PC-3 (cell line): ENCODE measurements at regions of chr14 and their contacts with region 1.

Region 1: DNA sequence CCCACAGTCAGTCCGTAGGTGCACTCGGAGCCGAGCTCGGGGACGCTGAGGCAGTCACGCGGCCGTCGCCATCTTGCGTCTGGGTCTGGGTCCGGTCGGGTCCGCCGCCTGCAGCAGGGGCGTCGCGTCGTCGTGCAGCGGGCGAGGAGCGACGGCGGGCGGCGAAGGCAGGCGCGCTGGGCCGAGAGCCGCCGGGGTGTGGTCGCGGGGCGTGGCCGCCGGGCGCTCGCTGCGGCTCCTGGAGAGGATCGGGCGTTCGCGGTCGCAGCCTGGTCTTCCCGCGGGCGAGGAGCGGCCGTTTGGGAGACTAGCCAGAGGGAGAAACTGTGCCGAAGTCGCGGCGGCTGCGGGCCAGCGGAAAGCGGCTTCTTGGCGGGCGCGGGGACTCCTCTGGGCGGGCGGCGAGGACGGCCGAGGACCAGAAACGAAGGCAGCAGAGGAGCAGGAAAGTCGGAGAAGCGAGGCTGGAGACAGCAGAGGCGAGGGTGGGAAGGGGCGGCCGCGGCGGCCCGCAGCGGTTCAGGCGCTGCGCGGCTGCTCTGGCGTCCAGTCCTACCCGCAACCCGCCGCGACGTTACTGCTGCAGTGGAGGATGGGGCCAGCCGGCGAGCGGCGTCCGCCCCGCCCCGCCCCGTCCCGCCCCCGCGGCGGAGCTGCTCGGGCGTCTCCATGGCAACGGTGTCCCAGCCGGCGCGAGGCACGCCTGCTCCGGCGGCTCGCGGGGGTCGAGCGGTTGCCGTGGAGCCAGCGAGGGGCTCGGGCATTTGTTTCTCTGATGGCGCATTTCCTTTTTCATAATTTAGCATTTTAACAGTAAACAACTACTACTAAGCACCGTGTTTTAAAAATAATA is at the start of gene PNMA1:
- DNase-seq: peak; percentile 85
- ATAC-seq: peak; percentile 71
- H3K4me3 ChIP-seq: peak within 1 kb of the TSS; percentile 99
- H3K27ac ChIP-seq: peak within 1 kb of the TSS; percentile 78
- H3K4me1 ChIP-seq: peaks cover 14% of the 10 kb centered on the region
- H3K27me3 ChIP-seq: no peaks in the 10 kb centered on the region
- CTCF ChIP-seq: no peak
- total RNA-seq, gene PNMA1: 30.8 and 36.7 TPM in 2 replicates

Region 2: GRCh38 chr14:73696466-73697400 is 17.3 kb before region 1 on chr14:
- CTCF ChIA-PET with region 1: no interaction called
- POLR2A ChIA-PET with region 1: no interaction called
- intact Hi-C with region 1: loop called (anchors 1 kb)
- DNase-seq: peak; percentile 97
- ATAC-seq: peak; percentile 91
- H3K4me3 ChIP-seq: peak overlapping the region; percentile 49
- H3K27ac ChIP-seq: peak overlapping the region; percentile 98
- H3K4me1 ChIP-seq: peaks cover 27% of the 10 kb centered on the region
- H3K27me3 ChIP-seq: no peaks in the 10 kb centered on the region
- CTCF ChIP-seq: no peak

Region 3: GRCh38 chr14:74733221-74733620 is 1019.2 kb after region 1 on chr14:
- CTCF ChIA-PET with region 1: no interaction called
- POLR2A ChIA-PET with region 1: no interaction called
- intact Hi-C with region 1: no loop called
- DNase-seq: no peak
- ATAC-seq: no peak
- H3K4me3 ChIP-seq: no peak overlapping the region
- H3K27ac ChIP-seq: no peak overlapping the region
- H3K4me1 ChIP-seq: no peaks in the 10 kb centered on the region
- H3K27me3 ChIP-seq: no peaks in the 10 kb centered on the region
- CTCF ChIP-seq: no peak